HepG2 (cell line): ENCODE measurements at regions of chr3 and their contacts with region 1.

Region 1: DNA sequence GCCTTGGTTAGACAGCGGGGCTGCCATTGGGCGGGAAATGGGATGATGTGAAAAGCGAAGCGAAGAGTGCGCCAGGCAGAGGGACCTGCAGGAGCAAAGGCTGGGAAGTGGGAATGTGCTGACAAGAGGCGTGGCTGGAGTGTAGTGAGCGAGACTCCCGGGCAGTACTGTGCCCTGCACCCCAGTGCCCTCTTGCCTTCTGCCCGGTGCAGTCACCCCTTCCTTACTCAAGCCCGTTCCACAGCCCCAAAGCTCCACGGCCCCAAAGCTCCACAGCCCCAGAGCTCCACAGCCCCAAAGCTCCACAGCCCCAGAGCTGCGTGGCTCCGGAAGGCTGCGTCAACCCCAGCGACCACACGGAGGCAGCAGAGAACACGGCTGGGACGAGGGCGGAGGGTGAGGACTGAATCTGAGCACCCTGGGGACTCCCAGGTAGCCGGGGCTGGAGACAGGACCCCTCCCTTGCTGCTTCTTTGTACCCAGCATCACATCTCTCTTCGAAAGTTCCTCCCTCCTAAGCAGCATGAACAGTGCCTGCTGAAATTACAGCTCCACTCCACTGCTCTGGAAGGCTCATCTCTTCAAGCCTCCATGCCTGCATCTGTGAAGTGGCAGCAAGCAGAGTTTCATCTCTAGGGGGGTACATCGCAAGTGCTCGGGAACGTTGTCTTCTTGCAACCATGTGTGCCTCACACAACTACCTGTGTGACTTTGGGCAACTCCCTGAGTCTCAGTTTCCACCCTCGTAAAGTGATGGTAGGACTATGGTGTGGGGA is 108.9 kb downstream of the FBLN2 start:
- DNase-seq: no peak
- ATAC-seq: peak; percentile 85
- H3K4me3 ChIP-seq: no peak overlapping the region
- H3K27ac ChIP-seq: no peak overlapping the region
- H3K4me1 ChIP-seq: no peaks in the 10 kb centered on the region
- H3K27me3 ChIP-seq: peaks cover 6 to 49% of the 10 kb centered on the region in 2 experiments; a peak in 3 of 5 replicates
- CTCF ChIP-seq: peak; percentile 96
- EP300 ChIP-seq: no peak
- POLR2A ChIP-seq: no peak
- RAD21 ChIP-seq: peak; percentile 47

Region 2: GRCh38 chr3:13884851-13885703 is 227.2 kb after region 1 on chr3:
- CTCF ChIA-PET with region 1: interaction called, 8 read pairs
- POLR2A ChIA-PET with region 1: no interaction called
- in situ Hi-C with region 1: loop called (anchors 5 kb)
- intact Hi-C with region 1: loop called (anchors 1 kb)
- DNase-seq: peak; percentile 36
- ATAC-seq: peak; percentile 79
- H3K4me3 ChIP-seq: no peak overlapping the region
- H3K27ac ChIP-seq: no peak overlapping the region
- H3K4me1 ChIP-seq: no peaks in the 10 kb centered on the region
- H3K27me3 ChIP-seq: peaks cover 5 to 16% of the 10 kb centered on the region in 2 experiments; a peak in 3 of 5 replicates
- CTCF ChIP-seq: peak; percentile 79
- EP300 ChIP-seq: no peak
- POLR2A ChIP-seq: no peak
- RAD21 ChIP-seq: peak; percentile 48; the same call in 1 of the 2 replicates